ENCODE measurements at regions of chr17 and their contacts with region 1.

Region 1: GRCh38 chr17:60577147-60577915 is 22.7 kb upstream of the PPM1D start:
- DNase-seq: no peak
- ATAC-seq: peak in 3 of 4 donors; percentile 86 to 87 (median 87)
- H3K4me3 ChIP-seq: peak overlapping the region in 1 of 4 donors; percentile 6
- H3K27ac ChIP-seq: peak overlapping the region in 1 of 4 donors; percentile 39
- H3K4me1 ChIP-seq: no peaks in the 10 kb centered on the region
- H3K27me3 ChIP-seq: no peaks in the 10 kb centered on the region
- CTCF ChIP-seq: no peak

Region 2: GRCh38 chr17:60630352-60630751 is 53.0 kb after region 1 on chr17:
- intact Hi-C with region 1: loop called in 1 of 3 experiments (anchors 10 kb)
- DNase-seq: no peak
- ATAC-seq: peak in 1 of 4 donors; percentile 34
- H3K4me3 ChIP-seq: no peak overlapping the region
- H3K27ac ChIP-seq: no peak overlapping the region
- H3K4me1 ChIP-seq: peaks cover 0 to 4% (median 0%) of the 10 kb centered on the region in 3 donors
- H3K27me3 ChIP-seq: no peaks in the 10 kb centered on the region
- CTCF ChIP-seq: no peak

Region 3: DNA sequence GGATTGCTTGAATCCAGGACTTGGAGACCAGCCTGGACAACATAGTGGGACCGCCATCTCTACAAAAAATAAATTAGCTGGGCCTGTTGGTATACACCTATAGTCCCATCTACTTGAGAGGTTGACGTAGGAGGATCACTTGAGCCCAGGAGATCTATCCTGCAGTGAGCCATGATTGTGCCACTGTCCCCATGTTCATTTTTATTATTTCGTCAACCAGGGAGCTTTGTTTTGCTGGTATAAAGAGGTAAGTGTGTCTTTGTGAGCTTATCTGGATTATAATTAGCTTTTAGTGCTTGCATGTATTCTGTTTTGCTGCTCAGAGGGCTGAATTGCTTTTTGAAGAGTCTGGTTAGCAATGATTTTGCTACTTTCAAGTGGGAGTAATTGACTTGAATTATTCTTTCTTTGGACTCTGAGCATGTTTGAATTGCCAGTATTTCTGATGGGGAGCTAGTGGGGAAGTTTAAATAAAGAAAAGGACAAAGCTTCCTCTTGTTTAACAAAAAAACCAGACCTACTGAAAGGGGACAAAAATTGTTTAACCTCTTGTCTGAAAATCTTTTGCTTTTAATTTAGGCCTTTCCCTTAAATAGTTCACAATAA is 68.7 kb after region 1 on chr17:
- intact Hi-C with region 1: no loop called
- DNase-seq: no peak
- ATAC-seq: no peak
- H3K4me3 ChIP-seq: no peak overlapping the region
- H3K27ac ChIP-seq: no peak overlapping the region
- H3K4me1 ChIP-seq: no peaks in the 10 kb centered on the region
- H3K27me3 ChIP-seq: no peaks in the 10 kb centered on the region
- CTCF ChIP-seq: no peak